Activated CD4-positive, alpha-beta T cell treated with anti-CD3 and anti-CD28 coated beads, Interleukin-2, amount 10 ng/mL, durations not matched to agents 7 days and 5 days (primary cell): ENCODE measurements at regions of chr19 and their contacts with region 1.

Region 1: DNA sequence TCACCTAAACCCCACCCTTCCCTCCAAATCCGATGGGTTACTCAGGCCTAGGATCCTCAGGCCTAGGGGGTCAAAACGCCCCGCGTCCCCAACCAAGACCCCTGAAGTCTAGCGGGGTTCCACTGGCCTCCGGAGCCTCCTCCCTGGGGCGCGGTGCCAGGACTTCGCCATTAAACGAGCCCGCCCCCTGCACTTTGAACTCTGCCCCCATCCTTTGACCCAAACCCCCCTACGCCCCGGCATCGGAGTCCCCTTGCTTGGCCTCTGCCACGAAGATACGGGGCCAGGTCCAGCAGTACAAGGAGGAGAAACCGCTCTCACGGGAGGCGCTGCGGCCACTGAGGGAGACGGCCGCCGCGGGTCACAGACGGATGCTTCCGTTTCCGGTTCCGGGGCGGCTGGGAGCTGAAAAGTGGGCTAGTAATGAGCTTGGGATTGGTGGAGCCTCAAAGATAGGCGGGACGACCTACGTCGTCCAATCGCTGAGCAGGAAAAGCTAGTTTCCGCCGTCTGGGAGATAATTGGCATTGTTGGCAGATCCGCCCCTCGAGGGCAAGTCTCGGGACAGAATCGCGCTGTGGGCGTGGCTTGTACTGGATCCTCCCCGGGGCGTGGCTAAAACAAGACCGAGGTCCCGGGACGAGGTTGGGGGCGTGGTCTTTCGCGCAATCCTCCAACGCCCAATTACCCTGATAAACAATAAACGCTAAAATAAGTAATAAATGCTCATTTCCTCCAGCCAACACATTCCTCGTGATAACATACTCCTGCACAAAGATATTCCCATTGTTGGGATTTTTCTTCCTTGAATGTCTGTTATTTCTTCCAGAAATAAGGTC is 5.7 kb upstream of the ZNF77 start:
- DNase-seq: peak; percentile 100
- H3K4me3 Mint-ChIP-seq: peak overlapping the region; percentile 94
- H3K27ac Mint-ChIP-seq: peak overlapping the region; percentile 97
- H3K4me1 Mint-ChIP-seq: peaks cover 27% of the 10 kb centered on the region
- H3K27me3 Mint-ChIP-seq: no peaks in the 10 kb centered on the region

Region 2: GRCh38 chr19:2840794-2841790 is 109.4 kb before region 1 on chr19 and contains the start of gene ZNF555:
- CTCF ChIA-PET with region 1: no interaction called
- POLR2A ChIA-PET with region 1: no interaction called
- DNase-seq: peak; percentile 98
- H3K4me3 Mint-ChIP-seq: peak within 1 kb of the TSS; percentile 86
- H3K27ac Mint-ChIP-seq: peak within 1 kb of the TSS; percentile 83
- H3K4me1 Mint-ChIP-seq: peaks cover 7% of the 10 kb centered on the region
- H3K27me3 Mint-ChIP-seq: peaks cover 5% of the 10 kb centered on the region
- total RNA-seq, gene ZNF555: 2.2 to 3.2 TPM

Region 3: GRCh38 chr19:2867025-2867991 is 83.2 kb before region 1 on chr19 and contains the start of gene ZNF556:
- CTCF ChIA-PET with region 1: no interaction called
- POLR2A ChIA-PET with region 1: no interaction called
- DNase-seq: no peak
- H3K4me3 Mint-ChIP-seq: no peak within 1 kb of the TSS
- H3K27ac Mint-ChIP-seq: no peak within 1 kb of the TSS
- H3K4me1 Mint-ChIP-seq: no peaks in the 10 kb centered on the region
- H3K27me3 Mint-ChIP-seq: no peaks in the 10 kb centered on the region
- total RNA-seq, gene ZNF556: not detected

Region 4: GRCh38 chr19:2962045-2962561 is 11.6 kb after region 1 on chr19:
- CTCF ChIA-PET with region 1: interaction called, 33 read pairs
- POLR2A ChIA-PET with region 1: no interaction called
- DNase-seq: peak; percentile 78
- H3K4me3 Mint-ChIP-seq: peak overlapping the region; percentile 56
- H3K27ac Mint-ChIP-seq: peak overlapping the region; percentile 78
- H3K4me1 Mint-ChIP-seq: peaks cover 5% of the 10 kb centered on the region
- H3K27me3 Mint-ChIP-seq: no peaks in the 10 kb centered on the region

Region 5: DNA sequence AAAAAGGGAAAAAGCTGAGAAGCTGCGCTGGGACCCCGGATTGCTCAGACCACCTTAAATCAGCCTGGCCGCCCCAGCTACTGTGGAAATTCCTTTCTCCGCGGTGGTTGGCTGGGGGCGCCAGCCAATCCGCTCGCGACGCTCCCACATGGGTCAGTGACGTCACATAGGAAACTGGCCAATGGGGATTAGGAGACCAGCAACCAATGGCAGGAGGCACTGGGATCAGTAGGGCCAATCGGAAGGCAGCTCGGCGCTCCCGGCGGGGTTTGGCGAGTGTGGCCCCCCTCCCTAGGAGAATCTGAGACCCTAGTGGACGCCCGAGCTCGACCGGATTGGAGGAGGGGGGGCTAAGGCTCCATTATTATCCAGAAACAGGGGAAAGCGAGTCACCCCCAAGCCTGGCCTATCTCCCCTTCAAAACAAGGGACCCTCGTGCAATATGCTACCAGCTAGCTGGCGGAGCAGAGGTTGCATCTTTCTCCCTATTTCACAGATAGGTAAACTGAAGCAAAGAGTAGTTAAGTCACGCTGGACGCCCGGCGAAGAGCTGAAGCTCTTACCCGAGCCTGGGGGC is 85.1 kb after region 1 on chr19:
- CTCF ChIA-PET with region 1: interaction called, 21 read pairs
- POLR2A ChIA-PET with region 1: no interaction called
- DNase-seq: peak; percentile 97
- H3K4me3 Mint-ChIP-seq: peak overlapping the region; percentile 79
- H3K27ac Mint-ChIP-seq: peak overlapping the region; percentile 97
- H3K4me1 Mint-ChIP-seq: peaks cover 21% of the 10 kb centered on the region
- H3K27me3 Mint-ChIP-seq: peaks cover 29% of the 10 kb centered on the region

Region 6: DNA sequence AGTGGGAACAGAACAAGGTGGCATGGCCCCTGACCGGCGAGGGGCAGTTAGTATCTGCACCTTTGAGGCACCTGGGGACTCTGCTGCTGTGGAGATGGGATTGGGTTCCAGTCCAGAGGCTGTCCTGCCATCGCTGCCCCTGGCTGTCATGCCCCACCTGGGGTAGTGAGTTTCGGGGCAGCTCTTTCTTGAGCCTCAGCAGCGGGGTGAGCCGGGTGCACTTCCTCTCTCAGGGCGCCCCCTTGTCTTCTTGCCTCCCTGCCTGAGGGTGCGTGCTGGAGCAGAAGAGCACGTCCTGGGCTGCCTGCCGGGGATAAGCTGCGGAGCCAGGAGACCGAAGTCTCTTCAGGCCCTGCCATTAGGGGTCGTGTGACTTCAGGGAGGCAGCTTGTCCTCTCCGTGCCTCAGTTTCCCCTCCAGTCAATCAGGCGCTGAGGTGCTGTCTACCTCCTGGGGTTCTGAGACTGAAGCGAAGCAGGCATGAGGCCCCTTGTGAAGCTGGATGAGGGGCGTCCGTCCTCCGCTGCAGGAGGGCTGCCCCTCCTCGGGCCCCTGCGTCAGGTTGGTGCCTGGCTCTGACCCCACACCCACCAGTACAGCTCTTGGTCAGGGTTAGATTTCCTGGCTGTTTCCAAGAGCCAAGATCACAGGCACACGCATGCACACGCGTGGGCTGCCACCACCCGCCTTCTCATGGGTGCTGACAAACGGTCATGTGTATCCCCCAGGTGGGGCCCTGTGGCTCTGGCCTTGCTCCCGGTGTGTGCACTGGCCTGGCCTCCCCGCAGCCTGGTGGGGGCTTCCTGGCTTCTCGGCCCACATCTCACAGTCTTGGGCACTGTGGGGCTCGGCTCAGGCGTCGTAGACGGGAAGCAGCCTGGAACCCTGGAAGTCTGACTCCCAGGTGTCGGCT is 152.0 kb after region 1 on chr19:
- CTCF ChIA-PET with region 1: interaction called, 29 read pairs
- POLR2A ChIA-PET with region 1: no interaction called
- DNase-seq: no peak
- H3K4me3 Mint-ChIP-seq: no peak overlapping the region
- H3K27ac Mint-ChIP-seq: no peak overlapping the region
- H3K4me1 Mint-ChIP-seq: peaks cover 12% of the 10 kb centered on the region
- H3K27me3 Mint-ChIP-seq: peaks cover 16% of the 10 kb centered on the region